ENCODE measurements at regions of chr14 and their contacts with region 1.

Region 1: GRCh38 chr14:58797010-58797429 is 159.3 kb downstream of the DACT1 start:
- DNase-seq: no peak
- H3K4me3 ChIP-seq: no peak overlapping the region
- H3K27me3 ChIP-seq: peaks cover 4% of the 10 kb centered on the region; the same call in 1 of the 2 replicates
- CTCF ChIP-seq: no peak

Region 2: DNA sequence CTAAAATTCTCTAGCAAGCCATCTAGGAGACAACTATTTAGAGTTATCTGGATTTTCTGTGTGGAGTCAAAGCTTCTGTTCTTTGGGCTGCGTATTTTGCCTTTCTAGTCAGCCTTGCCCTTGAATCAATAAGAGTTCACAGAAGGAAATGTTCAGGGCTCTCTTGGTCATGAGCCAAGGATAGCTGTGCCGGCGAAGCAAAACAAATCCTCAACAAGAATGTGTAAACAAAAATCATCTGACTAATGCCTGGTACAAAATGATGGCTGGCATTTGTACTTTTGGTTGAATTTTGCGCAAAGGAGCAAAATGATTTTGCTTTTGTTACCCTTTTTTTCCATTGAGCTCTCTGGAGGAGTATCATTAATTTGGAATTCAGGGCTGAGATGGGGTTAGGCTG is 11.8 kb after region 1 on chr14:
- CTCF ChIA-PET with region 1: interaction called, 10 read pairs
- POLR2A ChIA-PET with region 1: no interaction called
- DNase-seq: no peak
- H3K4me3 ChIP-seq: no peak overlapping the region
- H3K27me3 ChIP-seq: 0 out of 2 replicates have a peak, but pooled peaks cover 2% of the 10 kb centered on the region
- CTCF ChIP-seq: no peak